ENCODE measurements at regions of chr10 and their contacts with region 1.

Region 1: DNA sequence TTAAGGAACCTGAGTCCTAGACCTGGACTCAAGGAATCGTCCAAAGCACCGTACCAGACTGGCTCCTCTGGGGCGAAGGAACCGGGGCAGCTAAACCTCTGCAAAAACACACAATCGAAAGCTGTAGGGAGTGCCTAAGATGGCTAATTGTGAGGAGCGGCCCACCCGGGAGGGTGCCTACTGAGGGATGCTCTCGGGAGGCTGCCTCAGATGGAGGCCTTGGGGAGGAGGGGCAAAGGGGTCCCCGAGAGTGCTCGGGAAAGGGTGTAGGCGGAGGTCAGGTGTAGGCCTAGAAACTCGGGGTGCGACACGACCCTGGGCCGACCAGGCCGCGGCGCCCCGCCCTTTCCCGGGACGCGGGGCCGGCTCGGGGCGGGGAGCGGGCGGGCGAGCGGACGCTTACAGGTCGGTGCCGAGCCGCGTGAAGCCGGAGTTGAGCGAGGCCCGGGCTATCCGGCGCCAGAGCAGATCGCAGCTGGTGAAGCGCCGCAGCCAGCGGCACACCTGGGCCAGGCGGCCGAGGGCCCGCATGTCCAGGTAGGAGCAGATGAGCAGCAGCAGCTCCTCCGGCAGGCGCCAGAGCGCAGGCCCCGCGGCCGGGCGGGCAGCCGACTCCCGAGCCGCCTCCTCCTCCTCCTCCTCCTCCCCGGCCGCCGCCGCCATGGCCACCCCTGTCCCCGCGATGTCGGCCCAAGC is 844 bp downstream of the FBXW4 start:
- DNase-seq: peak; percentile 42 to 83 (median 70)
- ATAC-seq: peak; percentile 66
- H3K4me3 ChIP-seq: peak overlapping the region; percentile 85 to 88
- H3K4me3 Mint-ChIP-seq: peak overlapping the region; percentile 97
- H3K27ac ChIP-seq: peak overlapping the region; percentile 97 to 99
- H3K27ac Mint-ChIP-seq: peak overlapping the region; percentile 99
- H3K4me1 ChIP-seq: peaks cover 36% of the 10 kb centered on the region
- H3K4me1 Mint-ChIP-seq: peaks cover 48% of the 10 kb centered on the region
- H3K27me3 ChIP-seq: no peaks in the 10 kb centered on the region
- H3K27me3 Mint-ChIP-seq: no peaks in the 10 kb centered on the region
- CTCF ChIP-seq: no peak

Region 2: GRCh38 chr10:101060036-101060950 is 633.8 kb before region 1 on chr10:
- CTCF ChIA-PET with region 1: no interaction called
- POLR2A ChIA-PET with region 1: no interaction called
- intact Hi-C with region 1: loop called in 1 of 2 experiments (anchors 5 kb)
- DNase-seq: peak; percentile 80 to 96 (median 91)
- ATAC-seq: peak; percentile 67
- H3K4me3 ChIP-seq: peak overlapping the region; percentile 85 to 94
- H3K4me3 Mint-ChIP-seq: peak overlapping the region; percentile 98
- H3K27ac ChIP-seq: peak overlapping the region; percentile 55 to 92
- H3K27ac Mint-ChIP-seq: peak overlapping the region; percentile 91
- H3K4me1 ChIP-seq: peaks cover 27% of the 10 kb centered on the region
- H3K4me1 Mint-ChIP-seq: peaks cover 27% of the 10 kb centered on the region
- H3K27me3 ChIP-seq: peaks cover 20 to 27% of the 10 kb centered on the region in 2 experiments
- H3K27me3 Mint-ChIP-seq: peaks cover 18% of the 10 kb centered on the region
- CTCF ChIP-seq: peak; percentile 95

Region 3: DNA sequence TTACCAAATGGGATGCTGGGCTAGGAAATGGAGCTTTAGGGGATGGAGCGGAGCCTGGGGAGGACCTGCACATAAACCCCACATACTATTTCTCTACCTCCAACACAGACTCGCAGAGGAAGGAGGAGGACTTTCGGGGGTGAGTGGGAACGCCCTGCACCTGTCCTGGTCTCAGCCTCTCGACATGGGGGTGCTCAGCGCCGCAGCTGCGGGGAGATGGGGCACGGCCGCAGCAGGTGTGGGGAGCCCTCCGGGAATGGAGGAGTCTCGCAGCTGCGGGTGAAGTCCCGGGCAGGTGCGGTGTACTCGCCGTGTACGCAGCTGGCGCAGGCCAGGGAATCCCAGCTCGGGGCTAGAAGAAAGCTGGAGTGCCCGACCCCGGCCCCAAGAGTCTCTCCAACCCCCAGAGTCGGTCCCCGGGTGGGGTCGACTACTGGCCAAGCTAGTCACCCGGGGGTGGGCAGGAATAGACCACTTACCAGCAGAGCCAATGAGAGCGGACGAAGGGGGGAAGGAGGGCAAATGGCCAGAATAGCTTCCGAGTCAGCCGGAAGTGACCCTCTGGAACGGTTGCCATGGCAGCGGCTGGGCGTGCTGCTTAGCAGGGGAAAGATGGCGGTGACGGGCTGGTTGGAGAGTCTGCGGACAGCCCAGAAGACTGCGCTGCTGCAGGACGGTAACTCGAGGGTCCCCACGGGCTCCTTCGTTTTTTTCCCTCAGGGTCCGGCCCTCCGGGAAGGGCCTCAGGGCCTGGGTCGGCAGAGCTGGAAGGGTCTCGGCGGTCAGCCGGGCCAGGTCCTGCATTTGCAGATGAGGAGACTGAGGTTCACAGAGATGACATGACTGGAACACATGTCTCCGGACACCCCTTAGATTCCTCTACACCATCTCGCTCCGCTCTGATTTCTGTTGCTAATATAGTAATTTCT is 106.1 kb before region 1 on chr10 and contains the starts of genes DPCD and POLL:
- CTCF ChIA-PET with region 1: no interaction called
- POLR2A ChIA-PET with region 1: no interaction called
- intact Hi-C with region 1: loop called in 1 of 2 experiments (anchors 2 kb)
- DNase-seq: peak; percentile 77 to 94 (median 91)
- ATAC-seq: peak; percentile 91
- H3K4me3 ChIP-seq: peak within 1 kb of the TSS; percentile 98
- H3K4me3 Mint-ChIP-seq: peak within 1 kb of the TSS; percentile 94
- H3K27ac ChIP-seq: peak within 1 kb of the TSS; percentile 69 to 72
- H3K27ac Mint-ChIP-seq: peak within 1 kb of the TSS; percentile 90
- H3K4me1 ChIP-seq: peaks cover 19% of the 10 kb centered on the region
- H3K4me1 Mint-ChIP-seq: peaks cover 25% of the 10 kb centered on the region
- H3K27me3 ChIP-seq: no peaks in the 10 kb centered on the region
- H3K27me3 Mint-ChIP-seq: no peaks in the 10 kb centered on the region
- CTCF ChIP-seq: no peak
- total RNA-seq, gene DPCD: 1.0 TPM in 1 of 2 experiments, not detected in the other
- total RNA-seq, gene POLL: 19.9 to 23.0 TPM

Measured in CD8-positive, alpha-beta T cell (primary cell).